ENCODE measurements at regions of chr3 and their contacts with region 1.

Region 1: GRCh38 chr3:48151058-48151806 is 37.0 kb downstream of the CDC25A start:
- DNase-seq: no peak
- H3K4me3 ChIP-seq: no peak overlapping the region
- CTCF ChIP-seq: peak; percentile 90

Region 2: DNA sequence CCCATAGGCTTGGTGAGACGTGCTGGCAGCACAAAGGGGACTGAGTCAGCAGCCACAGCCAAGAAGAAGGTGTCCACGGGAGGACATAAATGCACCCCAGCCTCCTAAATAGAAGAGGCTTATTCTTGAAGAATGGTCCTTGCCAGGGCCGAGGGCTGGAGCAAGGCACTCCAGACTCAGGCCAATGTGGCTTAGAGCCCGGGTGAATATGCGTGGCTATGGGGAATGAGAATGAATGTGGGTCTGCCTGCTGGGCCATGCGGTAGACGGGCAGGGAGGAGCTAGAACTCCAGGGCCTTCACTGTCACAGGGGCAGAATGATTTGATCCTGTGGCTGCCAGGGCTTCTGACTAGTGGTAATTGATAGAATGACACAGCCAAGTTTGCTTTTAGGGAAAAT is 314.2 kb before region 1 on chr3:
- CTCF ChIA-PET with region 1: interaction called, 72 read pairs
- POLR2A ChIA-PET with region 1: interaction called, 3 read pairs
- DNase-seq: no peak
- H3K4me3 ChIP-seq: no peak overlapping the region
- CTCF ChIP-seq: no peak

Region 3: GRCh38 chr3:47849699-47850563 is 301.3 kb before region 1 on chr3:
- CTCF ChIA-PET with region 1: interaction called, 27 read pairs
- POLR2A ChIA-PET with region 1: no interaction called
- DNase-seq: no peak
- H3K4me3 ChIP-seq: no peak overlapping the region
- CTCF ChIP-seq: peak; percentile 39

Region 4: GRCh38 chr3:47872916-47873315 is 278.3 kb before region 1 on chr3:
- CTCF ChIA-PET with region 1: interaction called, 10 read pairs
- POLR2A ChIA-PET with region 1: no interaction called
- DNase-seq: no peak
- H3K4me3 ChIP-seq: no peak overlapping the region
- CTCF ChIP-seq: no peak

Region 5: GRCh38 chr3:47882338-47882737 is 268.9 kb before region 1 on chr3:
- CTCF ChIA-PET with region 1: interaction called, 11 read pairs
- POLR2A ChIA-PET with region 1: no interaction called
- DNase-seq: no peak
- H3K4me3 ChIP-seq: no peak overlapping the region
- CTCF ChIP-seq: no peak

Region 6: GRCh38 chr3:47989981-47990440 is 161.2 kb before region 1 on chr3:
- CTCF ChIA-PET with region 1: interaction called, 24 read pairs
- POLR2A ChIA-PET with region 1: no interaction called
- DNase-seq: peak; percentile 79
- H3K4me3 ChIP-seq: no peak overlapping the region
- CTCF ChIP-seq: peak; percentile 78

Region 7: DNA sequence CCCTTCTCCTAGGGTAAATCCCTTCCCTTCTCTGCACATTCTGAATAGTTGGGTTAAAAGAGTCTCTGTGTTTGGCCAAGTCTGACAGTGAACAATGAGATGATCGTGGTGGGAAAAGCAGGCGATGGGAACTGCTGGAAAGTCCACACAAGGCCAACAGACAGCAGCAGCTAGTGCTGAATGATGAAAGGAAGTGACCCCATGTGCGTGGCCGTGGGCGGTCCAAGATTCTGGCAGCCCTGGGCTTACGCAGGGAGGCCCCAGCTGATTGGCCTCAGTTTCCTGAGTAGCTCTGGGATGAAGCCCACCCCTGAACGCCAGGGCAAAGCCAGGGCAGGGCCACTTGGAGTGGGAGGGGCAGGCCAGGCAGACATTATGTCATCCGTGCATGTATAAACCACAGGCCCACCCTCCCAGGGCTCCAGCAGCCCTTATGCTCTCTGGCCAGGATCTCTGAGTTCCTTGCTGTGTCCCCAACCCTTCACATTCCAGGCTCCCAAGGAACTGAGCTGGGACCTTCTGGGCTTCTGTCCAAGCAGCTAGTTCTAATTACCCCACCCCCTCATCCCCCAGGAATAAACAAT is 20.8 kb before region 1 on chr3:
- CTCF ChIA-PET with region 1: interaction called, 13 read pairs
- POLR2A ChIA-PET with region 1: no interaction called
- DNase-seq: no peak
- H3K4me3 ChIP-seq: no peak overlapping the region
- CTCF ChIP-seq: no peak